ENCODE measurements at regions of chrX and their contacts with region 1.

Region 1: GRCh38 chrX:72018277-72019112 is 107.8 kb downstream of the NHSL2 start:
- DNase-seq: peak; percentile 89
- H3K4me3 Mint-ChIP-seq: no peak overlapping the region
- H3K27ac Mint-ChIP-seq: no peak overlapping the region
- H3K4me1 Mint-ChIP-seq: peaks cover 25% of the 10 kb centered on the region
- H3K27me3 Mint-ChIP-seq: no peaks in the 10 kb centered on the region

Region 2: GRCh38 chrX:71652405-71652804 is 366.1 kb before region 1 on chrX:
- CTCF ChIA-PET with region 1: no interaction called
- POLR2A ChIA-PET with region 1: no interaction called
- intact Hi-C with region 1: no loop called
- DNase-seq: peak; percentile 59
- H3K4me3 Mint-ChIP-seq: no peak overlapping the region
- H3K27ac Mint-ChIP-seq: no peak overlapping the region
- H3K4me1 Mint-ChIP-seq: peaks cover 5% of the 10 kb centered on the region
- H3K27me3 Mint-ChIP-seq: no peaks in the 10 kb centered on the region

Region 3: DNA sequence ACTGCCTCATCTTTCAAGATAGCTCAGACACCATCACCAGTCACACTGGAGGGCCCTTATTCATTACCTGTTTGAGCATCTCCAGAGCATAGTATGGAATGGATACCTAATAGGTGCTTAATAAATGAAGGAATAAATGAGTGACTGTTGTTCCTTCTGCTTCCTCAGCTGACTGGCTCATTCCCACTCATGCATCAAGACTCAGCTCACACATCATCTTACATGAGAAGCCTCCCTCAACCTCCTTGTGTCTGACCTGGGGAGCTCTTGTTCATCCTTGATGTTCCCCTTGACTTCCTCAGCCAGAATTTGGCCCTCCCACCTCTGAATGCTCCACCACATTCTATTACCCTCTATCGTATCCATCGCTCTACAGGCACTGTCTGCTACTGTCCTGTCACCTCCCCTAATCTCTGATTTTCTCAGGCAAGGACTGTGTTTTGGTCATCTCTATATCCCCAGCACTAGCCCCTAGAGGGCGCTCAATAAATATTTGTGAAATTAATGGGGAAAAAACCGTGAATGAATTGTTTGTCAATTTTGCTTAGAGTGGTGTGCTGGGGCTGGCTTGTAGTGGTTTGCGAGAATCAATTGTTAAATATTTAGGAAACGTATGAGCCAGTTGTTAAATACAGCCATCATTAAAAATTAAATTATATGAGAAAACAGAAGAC is 19.5 kb before region 1 on chrX:
- CTCF ChIA-PET with region 1: interaction called, 10 read pairs
- POLR2A ChIA-PET with region 1: no interaction called
- intact Hi-C with region 1: no loop called
- DNase-seq: peak; percentile 29
- H3K4me3 Mint-ChIP-seq: no peak overlapping the region
- H3K27ac Mint-ChIP-seq: no peak overlapping the region
- H3K4me1 Mint-ChIP-seq: no peaks in the 10 kb centered on the region
- H3K27me3 Mint-ChIP-seq: no peaks in the 10 kb centered on the region

Region 4: GRCh38 chrX:72029483-72030411 is 11.3 kb after region 1 on chrX:
- CTCF ChIA-PET with region 1: interaction called, 13 read pairs
- POLR2A ChIA-PET with region 1: no interaction called
- intact Hi-C with region 1: no loop called
- DNase-seq: no peak
- H3K4me3 Mint-ChIP-seq: no peak overlapping the region
- H3K27ac Mint-ChIP-seq: no peak overlapping the region
- H3K4me1 Mint-ChIP-seq: peaks cover 9% of the 10 kb centered on the region
- H3K27me3 Mint-ChIP-seq: no peaks in the 10 kb centered on the region

Region 5: GRCh38 chrX:72060196-72060920 is 41.9 kb after region 1 on chrX:
- CTCF ChIA-PET with region 1: no interaction called
- POLR2A ChIA-PET with region 1: no interaction called
- intact Hi-C with region 1: no loop called
- DNase-seq: no peak
- H3K4me3 Mint-ChIP-seq: no peak overlapping the region
- H3K27ac Mint-ChIP-seq: no peak overlapping the region
- H3K4me1 Mint-ChIP-seq: peaks cover 4% of the 10 kb centered on the region
- H3K27me3 Mint-ChIP-seq: no peaks in the 10 kb centered on the region

Region 6: DNA sequence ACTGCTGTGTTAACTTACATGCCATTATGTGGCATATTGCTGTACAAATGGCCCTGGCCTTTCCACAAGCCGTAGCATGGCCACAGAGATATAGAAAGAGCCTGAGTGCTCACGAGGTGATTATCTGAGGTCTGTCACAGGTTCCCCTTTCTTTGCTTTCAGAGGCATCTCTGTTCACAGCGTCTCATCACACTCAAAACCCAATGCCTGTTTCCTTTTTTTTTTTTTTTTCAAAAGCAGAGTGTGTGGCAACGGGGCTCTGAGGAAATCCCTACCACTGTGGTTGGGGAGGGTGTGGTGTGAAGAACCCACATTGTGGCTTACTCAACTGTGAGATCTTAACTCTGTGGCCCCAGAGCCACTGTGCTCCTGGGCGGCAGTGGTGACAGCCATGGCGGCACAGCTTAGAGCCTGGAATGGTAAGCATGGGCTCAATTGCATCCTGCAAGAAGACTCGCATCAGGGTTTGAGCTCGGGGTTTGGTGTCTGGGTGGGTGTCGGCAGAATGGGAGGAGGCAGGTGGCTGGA is 82.4 kb after region 1 on chrX:
- CTCF ChIA-PET with region 1: interaction called, 30 read pairs
- POLR2A ChIA-PET with region 1: no interaction called
- intact Hi-C with region 1: loop called (anchors 5 kb)
- DNase-seq: peak; percentile 87
- H3K4me3 Mint-ChIP-seq: peak overlapping the region; percentile 60
- H3K27ac Mint-ChIP-seq: peak overlapping the region; percentile 74
- H3K4me1 Mint-ChIP-seq: peaks cover 58% of the 10 kb centered on the region
- H3K27me3 Mint-ChIP-seq: no peaks in the 10 kb centered on the region

Region 7: GRCh38 chrX:72126539-72127140 is 108.1 kb after region 1 on chrX:
- CTCF ChIA-PET with region 1: interaction called, 57 read pairs
- POLR2A ChIA-PET with region 1: interaction called, 3 read pairs
- intact Hi-C with region 1: loop called (anchors 1 kb)
- DNase-seq: peak; percentile 88
- H3K4me3 Mint-ChIP-seq: no peak overlapping the region
- H3K27ac Mint-ChIP-seq: no peak overlapping the region
- H3K4me1 Mint-ChIP-seq: peaks cover 42% of the 10 kb centered on the region
- H3K27me3 Mint-ChIP-seq: peaks cover 9% of the 10 kb centered on the region

Region 8: GRCh38 chrX:72142094-72142793 is 123.7 kb after region 1 on chrX:
- CTCF ChIA-PET with region 1: interaction called, 10 read pairs
- POLR2A ChIA-PET with region 1: no interaction called
- intact Hi-C with region 1: no loop called
- DNase-seq: no peak
- H3K4me3 Mint-ChIP-seq: no peak overlapping the region
- H3K27ac Mint-ChIP-seq: no peak overlapping the region
- H3K4me1 Mint-ChIP-seq: peaks cover 29% of the 10 kb centered on the region
- H3K27me3 Mint-ChIP-seq: no peaks in the 10 kb centered on the region

Region 9: GRCh38 chrX:72461766-72462165 is 443.3 kb after region 1 on chrX:
- CTCF ChIA-PET with region 1: no interaction called
- POLR2A ChIA-PET with region 1: no interaction called
- intact Hi-C with region 1: no loop called
- DNase-seq: no peak
- H3K4me3 Mint-ChIP-seq: no peak overlapping the region
- H3K27ac Mint-ChIP-seq: no peak overlapping the region
- H3K4me1 Mint-ChIP-seq: no peaks in the 10 kb centered on the region
- H3K27me3 Mint-ChIP-seq: no peaks in the 10 kb centered on the region

Measured in activated CD4-positive, alpha-beta memory T cell treated with anti-CD3 and anti-CD28 coated beads for 36 hours (primary cell).